Left cardiac atrium (tissue), 4 donors: ENCODE measurements at regions of chr16 and their contacts with region 1.

Region 1: GRCh38 chr16:21083729-21084268 is 66.8 kb downstream of the DNAH3 start:
- DNase-seq: peak; percentile 77
- ATAC-seq: peak; percentile 93 to 94

Region 2: GRCh38 chr16:20799599-20799998 is 284.2 kb before region 1 on chr16:
- intact Hi-C with region 1: loop called in 1 of 2 experiments (anchors 5 kb)
- DNase-seq: no peak
- ATAC-seq: no peak

Region 3: GRCh38 chr16:21005008-21005407 is 78.8 kb before region 1 on chr16:
- intact Hi-C with region 1: no loop called
- DNase-seq: no peak
- ATAC-seq: no peak